Common myeloid progenitor, CD34-positive (primary cell): ENCODE measurements at regions of chr16 and their contacts with region 1.

Region 1: DNA sequence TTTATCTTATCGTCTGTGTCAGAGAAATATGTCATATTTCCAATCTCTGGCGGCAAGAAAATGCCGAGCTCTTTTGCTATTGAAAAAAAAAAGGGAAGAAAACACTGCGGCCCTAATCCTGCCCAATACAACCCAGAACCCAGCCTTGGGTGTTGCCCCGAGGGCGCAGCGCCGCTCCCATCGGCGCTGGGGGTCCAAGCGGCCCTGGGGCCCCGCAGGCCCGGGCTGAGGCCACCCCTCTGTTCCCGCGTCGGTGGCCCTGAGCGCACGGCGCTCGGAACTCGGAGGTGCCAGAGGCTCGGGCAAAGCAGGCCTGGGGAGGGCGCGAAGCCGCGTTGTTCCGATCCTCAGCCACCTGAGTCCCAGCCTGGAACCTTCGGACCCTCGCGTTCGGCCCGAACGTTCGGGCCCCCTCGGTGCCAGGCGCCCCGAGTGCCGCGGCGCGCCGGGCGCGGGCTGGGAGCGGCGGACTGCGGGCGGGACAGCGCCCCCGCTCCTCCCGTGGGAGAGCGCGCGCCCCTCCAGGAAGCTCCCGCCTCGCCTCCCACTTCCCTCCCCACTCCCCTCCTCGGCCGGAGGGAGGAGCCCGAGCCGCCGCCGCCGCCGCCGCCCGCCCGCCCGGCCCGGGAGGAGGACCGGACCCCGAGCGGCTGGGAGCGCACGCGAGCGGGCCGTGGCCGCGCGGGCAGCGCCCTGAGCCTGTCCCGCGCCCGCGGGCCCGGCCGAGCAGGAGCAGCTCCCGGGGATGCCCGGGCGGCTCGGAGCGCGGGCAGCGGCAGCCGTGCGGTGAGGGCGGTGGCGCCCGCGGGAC is at the start of gene CPNE2:
- DNase-seq: peak in 2 of 3 donors; percentile 50
- H3K4me3 ChIP-seq: peak within 1 kb of the TSS; percentile 64 to 86 (median 78)
- H3K27ac ChIP-seq: no peak within 1 kb of the TSS
- H3K4me1 ChIP-seq: peaks cover 2 to 25% (median 20%) of the 10 kb centered on the region in 4 experiments
- H3K27me3 ChIP-seq: no peaks in the 10 kb centered on the region

Region 2: GRCh38 chr16:57128771-57129389 is 36.7 kb after region 1 on chr16:
- CTCF ChIA-PET with region 1: interaction called, 20 read pairs
- POLR2A ChIA-PET with region 1: no interaction called
- DNase-seq: peak in 2 of 3 donors; percentile 57 to 77
- H3K4me3 ChIP-seq: no peak overlapping the region
- H3K27ac ChIP-seq: no peak overlapping the region
- H3K4me1 ChIP-seq: peaks cover 0 to 41% (median 14%) of the 10 kb centered on the region in 4 experiments
- H3K27me3 ChIP-seq: no peaks in the 10 kb centered on the region

Region 3: DNA sequence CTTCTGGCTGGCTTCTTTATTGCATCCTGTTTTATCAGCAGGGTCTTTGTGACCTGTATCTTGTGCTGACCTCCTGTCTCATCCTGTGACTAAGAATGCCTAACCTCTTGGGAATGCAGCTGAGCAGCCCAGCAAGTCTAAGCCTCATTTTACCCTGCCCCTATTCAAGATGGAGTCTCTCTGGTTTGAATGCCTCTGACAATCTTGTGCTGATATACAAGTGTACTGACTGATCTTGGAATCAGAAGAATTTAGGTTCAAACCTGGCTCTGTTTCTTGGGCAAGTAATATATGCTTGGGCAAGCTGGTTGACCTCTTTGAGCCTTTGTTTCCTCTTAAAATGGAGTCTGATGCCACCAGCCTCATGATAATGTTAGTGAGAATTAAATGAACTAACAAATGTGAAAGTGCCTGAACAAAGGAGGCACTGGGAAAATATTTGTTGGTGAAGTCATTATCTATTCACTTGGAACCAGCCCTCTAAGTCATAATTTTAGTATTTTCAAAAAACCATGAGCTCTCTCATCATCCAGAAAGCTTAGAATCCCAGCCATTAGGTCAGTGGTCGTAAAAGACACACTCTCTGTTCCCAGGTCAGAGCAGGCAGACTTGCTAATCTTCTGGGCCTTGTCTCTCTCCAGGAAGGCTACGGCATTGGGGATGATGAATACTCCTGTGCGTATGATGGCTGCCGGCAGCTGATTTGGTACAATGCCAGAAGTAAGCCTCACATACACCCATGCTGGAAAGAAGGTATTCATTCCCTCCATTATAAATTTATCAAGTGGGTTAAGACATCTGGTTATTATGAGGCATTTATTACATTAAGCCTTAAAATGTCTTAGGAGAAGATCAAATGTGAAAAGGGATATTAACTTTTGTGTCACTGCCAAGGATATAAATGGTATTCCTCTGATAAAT is 134.8 kb after region 1 on chr16:
- CTCF ChIA-PET with region 1: no interaction called
- POLR2A ChIA-PET with region 1: no interaction called
- DNase-seq: no peak
- H3K4me3 ChIP-seq: no peak overlapping the region
- H3K27ac ChIP-seq: peak overlapping the region in 1 of 2 experiments; percentile 0
- H3K4me1 ChIP-seq: no peaks in the 10 kb centered on the region
- H3K27me3 ChIP-seq: no peaks in the 10 kb centered on the region